ENCODE measurements at regions of chr2 and their contacts with region 1.

Region 1: DNA sequence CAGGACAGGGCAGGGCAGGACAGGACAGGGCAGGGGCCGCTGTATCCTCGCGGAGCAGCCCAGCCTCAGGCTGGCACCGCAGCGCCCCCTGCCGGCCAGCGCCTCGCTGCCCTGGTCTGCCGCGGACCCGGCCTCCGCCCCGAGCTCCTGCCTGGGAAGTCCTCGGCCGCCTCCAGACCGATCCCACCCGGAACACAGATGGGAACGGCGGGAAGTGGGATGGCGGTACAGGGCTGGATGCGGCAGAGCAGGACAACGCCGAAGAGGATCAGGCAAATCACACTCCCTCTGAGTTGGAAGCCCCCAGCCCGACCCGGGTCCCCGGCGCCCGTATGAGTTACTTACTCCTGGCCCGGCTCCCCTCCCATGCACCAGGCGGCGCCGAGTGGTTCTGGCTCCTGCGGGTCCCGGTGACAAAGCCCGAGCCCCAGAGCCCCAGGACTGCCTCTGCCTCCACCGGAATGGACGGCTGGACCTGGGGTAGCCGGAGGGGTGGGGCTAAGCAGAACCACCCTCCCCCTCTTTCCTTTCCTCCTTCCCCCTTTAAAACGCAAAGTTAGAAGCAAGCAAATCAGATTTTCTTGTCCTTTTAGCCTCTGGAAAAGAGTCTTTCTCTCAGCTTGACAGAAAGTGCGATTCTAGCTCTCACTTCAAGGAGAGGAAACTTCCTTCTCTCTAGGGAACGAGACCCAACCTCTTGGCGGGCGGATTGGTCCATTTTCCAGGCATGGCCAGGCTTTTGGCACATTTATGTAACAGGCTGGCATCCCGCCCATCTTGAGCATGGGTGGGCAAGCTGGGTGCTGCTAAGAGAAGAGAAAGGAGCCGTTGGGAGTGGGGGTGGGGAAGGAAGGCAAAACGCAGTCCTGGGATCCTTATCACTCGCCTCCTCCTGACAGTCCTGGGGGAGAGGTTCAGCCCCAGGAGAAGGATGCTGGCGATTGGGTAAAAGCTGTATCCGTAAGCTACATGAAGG is at the start of gene TP53I3:
- DNase-seq: peak; percentile 57 to 91 (median 78)
- ATAC-seq: peak; percentile 88
- H3K4me3 ChIP-seq: peak within 1 kb of the TSS; percentile 61
- H3K4me3 Mint-ChIP-seq: peak within 1 kb of the TSS; percentile 91
- H3K27ac ChIP-seq: peak within 1 kb of the TSS in 1 of 2 donors; percentile 5
- H3K27ac Mint-ChIP-seq: peak within 1 kb of the TSS; percentile 82
- H3K4me1 ChIP-seq: peaks cover 19% of the 10 kb centered on the region
- H3K4me1 Mint-ChIP-seq: peaks cover 21% of the 10 kb centered on the region
- H3K27me3 ChIP-seq: no peaks in the 10 kb centered on the region
- H3K27me3 Mint-ChIP-seq: no peaks in the 10 kb centered on the region
- CTCF ChIP-seq: peak; percentile 94
- total RNA-seq, gene TP53I3: 0.20 to 0.30 TPM

Region 2: GRCh38 chr2:22981785-22982184 is 1102.9 kb before region 1 on chr2:
- CTCF ChIA-PET with region 1: no interaction called
- POLR2A ChIA-PET with region 1: no interaction called
- intact Hi-C with region 1: no loop called
- DNase-seq: no peak
- ATAC-seq: no peak
- H3K4me3 ChIP-seq: no peak overlapping the region
- H3K4me3 Mint-ChIP-seq: no peak overlapping the region
- H3K27ac ChIP-seq: no peak overlapping the region
- H3K27ac Mint-ChIP-seq: no peak overlapping the region
- H3K4me1 ChIP-seq: no peaks in the 10 kb centered on the region
- H3K4me1 Mint-ChIP-seq: no peaks in the 10 kb centered on the region
- H3K27me3 ChIP-seq: no peaks in the 10 kb centered on the region
- H3K27me3 Mint-ChIP-seq: no peaks in the 10 kb centered on the region
- CTCF ChIP-seq: no peak

Region 3: DNA sequence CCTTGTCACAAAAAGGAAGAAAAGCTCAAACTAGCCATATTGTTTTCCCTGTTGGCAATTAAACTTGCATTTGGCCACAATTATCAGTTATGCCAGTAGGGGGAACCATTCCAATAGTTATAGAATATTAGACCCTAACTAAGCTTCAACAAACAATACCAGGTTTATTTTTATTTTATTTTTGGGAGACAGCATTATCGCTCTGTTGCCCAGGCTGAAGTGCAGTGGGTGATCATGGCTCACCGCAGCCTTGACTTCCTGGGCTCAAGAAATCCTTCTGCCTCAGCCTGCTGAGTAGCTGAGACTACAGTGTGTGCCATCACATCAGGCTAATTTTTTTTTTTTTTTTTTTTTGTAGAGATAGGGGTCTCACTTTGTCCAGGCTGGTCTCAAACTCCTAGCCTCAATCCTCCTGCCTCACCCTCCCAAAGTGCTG is 259.9 kb before region 1 on chr2:
- CTCF ChIA-PET with region 1: interaction called, 32 read pairs
- POLR2A ChIA-PET with region 1: interaction called, 11 read pairs
- intact Hi-C with region 1: loop called (anchors 1 kb)
- DNase-seq: peak in 6 of 14 experiments; percentile 4 to 72 (median 51)
- ATAC-seq: peak; percentile 70
- H3K4me3 ChIP-seq: no peak overlapping the region
- H3K4me3 Mint-ChIP-seq: no peak overlapping the region
- H3K27ac ChIP-seq: no peak overlapping the region
- H3K27ac Mint-ChIP-seq: no peak overlapping the region
- H3K4me1 ChIP-seq: no peaks in the 10 kb centered on the region
- H3K4me1 Mint-ChIP-seq: no peaks in the 10 kb centered on the region
- H3K27me3 ChIP-seq: no peaks in the 10 kb centered on the region
- H3K27me3 Mint-ChIP-seq: no peaks in the 10 kb centered on the region
- CTCF ChIP-seq: peak; percentile 79

Region 4: DNA sequence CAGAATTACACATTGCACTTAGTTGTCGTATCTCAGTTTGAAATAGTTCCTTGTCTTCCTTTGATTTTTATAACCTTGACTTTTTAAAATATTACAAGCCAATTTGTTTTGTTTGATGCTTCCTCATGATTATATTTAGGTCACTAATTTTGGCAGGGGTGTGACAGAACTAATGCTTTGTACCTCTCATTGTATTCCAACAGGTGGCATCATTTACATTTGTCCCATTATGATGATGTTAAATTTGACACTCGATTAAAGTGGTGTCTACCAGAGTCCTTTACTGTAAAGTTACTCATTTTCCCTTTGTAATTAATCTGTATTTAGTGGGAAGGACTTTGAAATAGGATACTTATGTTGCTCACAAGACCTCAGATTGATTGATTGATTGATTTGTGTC is 96.3 kb before region 1 on chr2:
- CTCF ChIA-PET with region 1: interaction called, 4 read pairs
- POLR2A ChIA-PET with region 1: no interaction called
- intact Hi-C with region 1: loop called (anchors 1 kb)
- DNase-seq: peak in 3 of 14 experiments; percentile 40 to 44 (median 43)
- ATAC-seq: peak; percentile 66
- H3K4me3 ChIP-seq: no peak overlapping the region
- H3K4me3 Mint-ChIP-seq: no peak overlapping the region
- H3K27ac ChIP-seq: no peak overlapping the region
- H3K27ac Mint-ChIP-seq: no peak overlapping the region
- H3K4me1 ChIP-seq: no peaks in the 10 kb centered on the region
- H3K4me1 Mint-ChIP-seq: no peaks in the 10 kb centered on the region
- H3K27me3 ChIP-seq: no peaks in the 10 kb centered on the region
- H3K27me3 Mint-ChIP-seq: no peaks in the 10 kb centered on the region
- CTCF ChIP-seq: peak; percentile 39

Region 5: GRCh38 chr2:24046930-24047702 is 37.6 kb before region 1 on chr2 and contains the start of gene WDCP:
- CTCF ChIA-PET with region 1: interaction called, 14 read pairs
- POLR2A ChIA-PET with region 1: interaction called, 8 read pairs
- intact Hi-C with region 1: no loop called
- DNase-seq: peak; percentile 82 to 98 (median 88)
- ATAC-seq: peak; percentile 99
- H3K4me3 ChIP-seq: peak within 1 kb of the TSS; percentile 83
- H3K4me3 Mint-ChIP-seq: peak within 1 kb of the TSS; percentile 94
- H3K27ac ChIP-seq: peak within 1 kb of the TSS in 1 of 2 donors; percentile 22
- H3K27ac Mint-ChIP-seq: peak within 1 kb of the TSS; percentile 79
- H3K4me1 ChIP-seq: peaks cover 30% of the 10 kb centered on the region
- H3K4me1 Mint-ChIP-seq: peaks cover 36% of the 10 kb centered on the region
- H3K27me3 ChIP-seq: peaks cover 10 to 21% of the 10 kb centered on the region in 2 experiments
- H3K27me3 Mint-ChIP-seq: peaks cover 10% of the 10 kb centered on the region
- CTCF ChIP-seq: no peak
- total RNA-seq, gene WDCP: 1.4 to 2.0 TPM

Region 6: DNA sequence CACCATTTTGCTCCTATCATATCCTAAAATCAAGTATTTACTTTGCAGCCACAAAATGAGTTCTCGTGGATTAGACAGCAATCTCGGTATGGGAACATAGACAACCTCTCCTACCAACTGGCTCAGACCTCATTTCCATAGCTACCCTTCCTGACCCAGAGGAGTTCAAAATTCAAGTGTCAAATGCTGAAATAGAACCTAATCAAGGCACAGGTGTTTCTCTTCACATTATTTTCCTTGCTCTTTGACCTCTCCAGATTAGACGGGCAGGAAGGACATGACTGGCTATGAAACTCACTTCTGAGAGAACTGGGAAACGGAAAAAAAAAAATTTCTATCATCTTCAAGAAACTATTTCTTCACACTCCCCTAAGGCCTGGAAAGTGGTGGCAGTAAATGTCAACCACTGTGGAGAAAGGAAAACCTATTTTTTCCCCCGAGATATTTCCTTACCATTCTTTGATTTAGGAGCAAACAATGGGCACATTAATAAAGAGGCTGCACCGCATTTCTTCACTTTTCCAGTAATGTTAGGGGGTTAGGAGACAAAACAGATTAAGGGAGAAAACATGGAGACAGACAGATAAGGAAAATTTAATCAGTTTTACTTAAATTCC is 1652.3 kb after region 1 on chr2:
- CTCF ChIA-PET with region 1: no interaction called
- POLR2A ChIA-PET with region 1: no interaction called
- intact Hi-C with region 1: no loop called
- DNase-seq: no peak
- ATAC-seq: no peak
- H3K4me3 ChIP-seq: no peak overlapping the region
- H3K4me3 Mint-ChIP-seq: no peak overlapping the region
- H3K27ac ChIP-seq: no peak overlapping the region
- H3K27ac Mint-ChIP-seq: no peak overlapping the region
- H3K4me1 ChIP-seq: no peaks in the 10 kb centered on the region
- H3K4me1 Mint-ChIP-seq: no peaks in the 10 kb centered on the region
- H3K27me3 ChIP-seq: no peaks in the 10 kb centered on the region
- H3K27me3 Mint-ChIP-seq: no peaks in the 10 kb centered on the region
- CTCF ChIP-seq: no peak